Left ventricle myocardium inferior (tissue), 1 donor: ENCODE measurements at regions of chr1 and their contacts with region 1.

Region 1: DNA sequence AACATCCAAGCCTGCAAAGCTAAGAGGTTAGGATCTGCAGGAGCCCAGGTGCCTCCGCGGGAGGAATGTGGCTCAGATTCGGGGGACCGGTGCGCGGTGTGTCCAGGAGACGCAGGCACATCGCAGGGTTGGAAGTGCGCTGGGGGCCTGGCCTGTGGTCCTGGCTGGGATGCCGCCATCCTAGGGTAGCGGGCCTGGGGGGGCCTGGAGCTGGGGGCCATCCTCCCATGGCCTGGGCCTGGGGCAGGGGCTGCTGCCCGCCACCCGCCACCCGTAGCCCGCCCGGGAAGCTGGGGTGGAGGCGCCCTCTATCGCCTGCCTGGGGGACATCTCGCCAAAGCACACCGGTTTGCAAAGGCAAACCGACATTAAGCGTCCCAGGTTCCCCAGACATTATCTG is 170.6 kb upstream of the ARHGEF16 start:
- DNase-seq: peak; percentile 51
- H3K4me3 ChIP-seq: peak overlapping the region; percentile 19
- H3K27ac ChIP-seq: peak overlapping the region; percentile 81
- H3K4me1 ChIP-seq: peaks cover 27% of the 10 kb centered on the region
- H3K27me3 ChIP-seq: peaks cover 46% of the 10 kb centered on the region
- CTCF ChIP-seq: peak; percentile 78

Region 2: DNA sequence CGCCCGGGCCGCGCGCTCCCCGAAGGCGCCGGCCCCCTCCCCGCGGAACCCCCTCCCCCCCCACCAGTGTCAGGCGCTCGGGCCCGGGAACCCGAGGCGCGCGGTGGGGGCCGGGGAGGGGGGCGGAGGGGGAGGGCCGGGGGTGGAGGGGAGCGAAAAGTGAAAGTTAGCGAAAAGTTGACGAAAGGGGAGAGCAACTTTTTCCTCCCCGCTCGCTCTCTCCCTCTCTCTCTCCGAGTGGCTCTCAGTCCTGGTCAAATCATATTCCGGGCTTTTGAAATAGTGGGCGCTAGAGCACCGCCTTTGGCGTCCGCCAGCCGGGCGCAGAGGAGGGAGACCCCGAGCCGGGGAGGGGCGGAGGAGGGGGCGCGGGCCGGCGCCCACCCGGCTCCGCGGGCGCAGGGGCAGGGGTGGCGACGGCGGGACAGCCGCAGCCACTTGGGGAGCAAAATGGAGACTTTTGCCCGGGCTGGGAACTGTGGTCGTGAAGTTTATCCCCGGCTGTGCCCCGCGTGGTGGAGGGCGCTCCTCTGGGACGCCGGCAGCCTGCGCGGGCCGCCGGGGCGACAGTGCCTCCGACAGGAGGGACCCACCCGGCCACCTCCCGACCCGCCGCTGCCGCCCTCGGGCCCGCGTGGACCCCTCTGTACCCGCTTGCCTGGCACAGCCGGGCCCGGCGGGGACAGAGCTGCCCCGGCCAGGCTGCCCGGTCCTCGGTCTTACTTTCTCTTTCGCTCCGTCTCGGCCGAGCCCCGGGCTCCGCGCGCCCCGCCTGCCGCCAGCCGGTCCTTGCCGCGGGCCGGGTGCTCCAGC is 214.2 kb before region 1 on chr1:
- intact Hi-C with region 1: loop called (anchors 10 kb)
- DNase-seq: peak; percentile 36
- H3K4me3 ChIP-seq: peak overlapping the region; percentile 87
- H3K27ac ChIP-seq: peak overlapping the region; percentile 96
- H3K4me1 ChIP-seq: peaks cover 74% of the 10 kb centered on the region
- H3K27me3 ChIP-seq: peaks cover 92% of the 10 kb centered on the region
- CTCF ChIP-seq: peak; percentile 47